Esophagus muscularis mucosa (tissue), 4 donors: ENCODE measurements at regions of chr11 and their contacts with region 1.

Region 1: GRCh38 chr11:2151500-2152257 is 9.3 kb downstream of the INS start:
- DNase-seq: peak; percentile 94
- H3K4me3 ChIP-seq: no peak overlapping the region
- H3K27ac ChIP-seq: peak overlapping the region in 1 of 4 donors; percentile 28
- H3K4me1 ChIP-seq: peaks cover 6 to 10% (median 8%) of the 10 kb centered on the region in 4 donors
- H3K27me3 ChIP-seq: peaks cover 0 to 61% (median 18%) of the 10 kb centered on the region in 4 donors
- CTCF ChIP-seq: peak; percentile 82 to 94 (median 83)
- EP300 ChIP-seq: no peak
- POLR2A ChIP-seq: no peak

Region 2: DNA sequence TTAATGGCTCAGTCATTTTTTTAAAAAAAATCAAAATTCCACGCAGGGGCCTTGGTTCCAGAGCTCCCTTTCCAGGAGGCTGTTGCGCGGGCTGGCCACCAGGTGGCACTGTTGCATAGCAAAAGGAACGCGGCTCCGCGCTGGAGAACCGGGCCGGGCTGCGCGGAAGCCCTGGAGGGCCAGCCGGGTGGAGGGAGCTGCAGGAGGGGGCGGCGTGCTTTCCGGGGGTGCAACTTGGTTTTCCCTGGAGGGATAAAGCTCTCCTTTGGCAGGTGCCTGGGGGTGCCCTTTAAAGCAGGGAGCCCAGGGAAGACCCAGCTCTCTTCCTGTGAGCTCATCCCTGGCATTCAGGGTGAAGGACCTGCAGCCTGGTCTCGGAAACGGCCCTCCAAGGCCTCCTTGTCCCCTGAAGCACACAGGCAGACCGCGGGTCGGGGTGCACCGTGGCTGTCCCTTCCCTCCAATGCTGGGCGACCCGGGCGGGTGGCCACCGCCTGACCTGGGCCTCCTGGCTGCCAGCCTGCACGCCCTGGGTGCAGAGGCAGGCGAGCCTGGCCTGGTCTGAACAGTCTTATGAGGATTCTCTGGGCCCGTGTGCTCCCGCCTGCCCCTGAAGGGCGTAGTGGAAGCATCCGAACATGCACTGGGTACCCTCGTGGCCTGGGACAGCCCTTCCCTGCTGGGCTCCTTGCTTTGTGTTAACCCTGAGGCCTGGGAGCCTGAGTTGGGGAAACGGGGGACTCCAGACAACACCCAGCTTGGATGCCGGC is 498.7 kb before region 1 on chr11:
- intact Hi-C with region 1: loop called (anchors 5 kb)
- DNase-seq: no peak
- H3K4me3 ChIP-seq: no peak overlapping the region
- H3K27ac ChIP-seq: no peak overlapping the region
- H3K4me1 ChIP-seq: peaks cover 0 to 9% (median 8%) of the 10 kb centered on the region in 4 donors
- H3K27me3 ChIP-seq: peaks cover 0 to 35% (median 0%) of the 10 kb centered on the region in 4 donors
- CTCF ChIP-seq: peak; percentile 97 to 99 (median 97)
- EP300 ChIP-seq: no peak
- POLR2A ChIP-seq: no peak

Region 3: DNA sequence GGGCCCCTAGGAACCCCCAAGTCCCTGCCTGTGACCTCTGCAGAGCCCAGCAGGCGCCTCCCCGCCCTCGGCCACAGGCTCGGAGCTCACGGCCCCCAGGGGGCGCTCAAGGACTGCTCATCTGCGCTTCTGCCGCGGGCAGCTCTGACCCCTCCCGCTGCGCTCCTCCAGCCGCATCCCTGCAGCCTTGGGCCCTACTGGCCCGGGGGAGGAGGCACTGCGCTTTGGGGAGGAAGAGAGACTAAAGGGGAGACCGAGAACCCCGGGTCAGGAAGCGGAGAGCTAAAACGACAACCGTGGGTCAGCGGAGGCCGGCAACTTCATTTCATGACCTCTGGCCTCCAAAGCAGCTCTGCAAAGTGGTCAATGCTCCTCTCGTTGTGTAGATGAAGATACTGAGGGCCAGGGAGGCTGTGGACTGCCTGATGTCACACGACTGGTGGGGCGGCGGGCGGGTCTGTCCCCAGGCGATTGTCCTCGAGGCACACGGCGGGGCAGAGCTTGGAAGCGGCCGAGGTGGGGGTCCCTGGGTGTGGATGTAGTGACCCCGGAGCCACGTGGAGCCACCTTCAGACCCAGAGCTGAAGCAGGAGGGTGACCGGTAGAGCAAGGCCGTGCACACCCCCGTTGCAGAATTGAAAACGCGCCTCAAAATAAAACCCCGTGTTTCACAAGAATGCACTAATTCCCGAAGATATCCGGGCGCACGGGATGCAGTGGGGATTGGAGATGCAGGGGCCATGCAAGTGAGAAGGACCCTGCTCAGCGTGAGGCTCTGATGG is 457.4 kb before region 1 on chr11:
- intact Hi-C with region 1: loop called (anchors 2 kb)
- DNase-seq: peak; percentile 96
- H3K4me3 ChIP-seq: peak overlapping the region in 3 of 4 donors; percentile 38 to 55 (median 45)
- H3K27ac ChIP-seq: peak overlapping the region in 2 of 4 donors; percentile 38 to 63
- H3K4me1 ChIP-seq: peaks cover 11 to 17% (median 14%) of the 10 kb centered on the region in 4 donors
- H3K27me3 ChIP-seq: peaks cover 0 to 42% (median 0%) of the 10 kb centered on the region in 4 donors
- CTCF ChIP-seq: peak; percentile 86 to 94 (median 89)
- EP300 ChIP-seq: no peak
- POLR2A ChIP-seq: no peak

Region 4: DNA sequence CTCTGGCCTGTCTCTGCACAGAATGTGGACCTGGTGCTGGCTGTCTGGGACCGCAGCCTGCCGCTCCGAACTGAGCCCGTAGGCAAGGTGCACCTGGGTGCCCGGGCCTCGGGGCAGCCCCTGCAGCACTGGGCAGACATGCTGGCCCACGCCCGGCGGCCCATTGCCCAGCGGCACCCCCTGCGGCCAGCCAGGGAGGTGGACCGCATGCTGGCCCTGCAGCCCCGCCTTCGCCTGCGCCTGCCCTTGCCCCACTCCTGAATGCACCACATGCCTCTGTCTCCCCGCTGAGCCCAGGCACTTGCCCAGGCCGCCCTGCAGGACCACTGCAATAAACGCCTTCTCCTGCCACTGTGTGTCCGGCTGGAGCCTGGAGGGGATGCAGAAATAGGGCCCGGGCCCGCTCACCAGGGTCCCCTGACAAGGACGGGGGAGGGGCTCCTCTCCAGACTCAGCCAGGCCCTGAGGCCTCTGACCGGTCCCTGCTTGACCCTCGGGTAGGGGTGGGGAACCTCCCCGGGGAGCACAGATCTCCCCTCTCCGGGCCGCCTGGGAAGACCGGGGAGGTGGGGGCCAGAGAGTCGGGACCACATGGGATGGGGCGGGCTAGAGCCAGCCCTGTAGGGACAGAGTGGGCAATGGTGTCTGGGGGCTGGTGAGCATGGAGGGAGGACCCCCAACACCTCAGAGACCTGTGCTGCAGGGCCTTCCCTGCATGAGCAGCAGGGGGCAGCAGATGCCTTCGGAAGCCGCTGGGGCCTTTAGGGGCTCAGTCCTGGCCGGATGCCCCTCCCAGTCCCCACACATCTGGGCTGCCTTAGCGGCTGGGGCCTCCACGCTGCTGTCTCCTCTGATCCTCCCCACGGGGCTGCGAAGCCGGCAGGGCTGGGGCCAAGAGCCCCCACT is 314.3 kb before region 1 on chr11:
- intact Hi-C with region 1: loop called (anchors 5 kb)
- DNase-seq: no peak
- H3K4me3 ChIP-seq: no peak overlapping the region
- H3K27ac ChIP-seq: no peak overlapping the region
- H3K4me1 ChIP-seq: peaks cover 10 to 30% (median 15%) of the 10 kb centered on the region in 4 donors
- H3K27me3 ChIP-seq: peaks cover 0 to 13% (median 0%) of the 10 kb centered on the region in 4 donors
- CTCF ChIP-seq: peak; percentile 82 to 88 (median 86)
- EP300 ChIP-seq: no peak
- POLR2A ChIP-seq: no peak

Region 5: GRCh38 chr11:1882519-1883238 is 269.0 kb before region 1 on chr11:
- intact Hi-C with region 1: loop called (anchors 2 kb)
- DNase-seq: peak; percentile 96
- H3K4me3 ChIP-seq: peak overlapping the region in 1 of 4 donors; percentile 2
- H3K27ac ChIP-seq: peak overlapping the region; percentile 79 to 84 (median 82)
- H3K4me1 ChIP-seq: peaks cover 41 to 52% (median 48%) of the 10 kb centered on the region in 4 donors
- H3K27me3 ChIP-seq: no peaks in the 10 kb centered on the region
- CTCF ChIP-seq: peak; percentile 81 to 94 (median 92)
- EP300 ChIP-seq: no peak
- POLR2A ChIP-seq: no peak